ENCODE measurements at regions of chr13 and their contacts with region 1.

Region 1: GRCh38 chr13:44710576-44710975 is 134.4 kb upstream of the TSC22D1 start:
- DNase-seq: no peak

Region 2: DNA sequence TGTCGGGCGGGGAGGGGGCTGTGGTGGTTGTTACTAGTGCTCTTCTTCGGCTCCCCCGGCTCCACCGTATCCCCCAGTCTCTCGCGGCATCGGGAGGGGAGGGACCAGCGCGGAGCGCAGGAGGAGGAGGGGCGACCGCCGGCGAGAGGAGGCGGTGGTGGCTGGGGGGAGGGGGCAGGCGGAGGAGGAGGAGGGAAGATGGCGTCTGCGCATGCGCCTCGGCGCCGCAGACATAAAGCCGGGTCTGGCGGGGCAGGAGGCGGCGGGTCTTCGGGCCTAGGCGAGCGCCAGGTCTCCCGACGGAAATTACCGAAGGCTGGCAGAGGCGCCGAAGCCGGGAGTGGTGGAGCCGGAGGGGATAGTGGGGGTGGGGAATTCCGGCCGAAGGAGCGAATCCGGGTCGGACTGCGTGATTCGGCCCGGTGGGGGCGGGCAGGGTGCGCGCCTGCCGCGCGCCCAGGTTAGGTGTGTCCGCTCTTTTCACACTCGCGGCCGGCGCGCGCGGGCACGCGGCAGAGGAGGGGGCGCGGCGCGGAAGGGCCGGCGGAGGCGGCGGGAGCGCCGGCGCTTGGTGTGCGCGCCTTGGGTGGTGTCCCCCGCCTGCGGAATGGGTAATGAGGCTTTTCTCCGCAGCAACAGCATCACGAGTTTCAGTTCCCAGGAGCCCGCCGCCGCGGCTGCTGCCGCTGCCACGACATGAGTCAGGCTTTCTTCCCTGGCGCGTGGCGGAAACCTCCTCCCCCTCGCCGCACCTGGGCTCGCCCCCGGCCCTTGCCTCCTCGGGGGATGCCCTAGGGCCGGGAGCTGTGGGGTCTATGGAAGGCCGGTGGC is 133.1 kb before region 1 on chr13:
- intact Hi-C with region 1: loop called in 1 of 2 experiments (anchors 10 kb)
- DNase-seq: peak; percentile 99

Region 3: DNA sequence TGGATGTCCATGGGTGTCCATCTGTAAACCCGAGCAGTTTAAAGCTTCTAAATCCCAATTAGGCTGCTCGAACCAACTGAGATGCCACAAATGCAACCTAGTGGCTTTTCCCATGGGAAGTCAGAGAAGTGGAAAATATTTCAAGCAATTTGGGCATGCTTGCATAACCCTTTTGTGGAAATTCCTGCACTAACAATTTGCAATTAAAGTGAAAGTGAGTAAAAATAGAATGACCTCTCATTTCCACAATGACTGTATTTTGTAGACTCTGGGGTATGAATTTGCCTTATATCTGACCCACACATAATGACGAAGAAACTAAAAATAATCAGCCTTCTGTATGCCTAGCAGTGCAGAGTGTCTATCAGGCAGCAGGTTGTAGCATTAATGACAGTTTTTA is 42.6 kb before region 1 on chr13:
- intact Hi-C with region 1: no loop called
- DNase-seq: no peak

Region 4: GRCh38 chr13:44969551-44970484 is 259.2 kb after region 1 on chr13:
- intact Hi-C with region 1: no loop called
- DNase-seq: no peak